Motor neuron (in vitro differentiated cells): ENCODE measurements at regions of chr10 and their contacts with region 1.

Region 1: DNA sequence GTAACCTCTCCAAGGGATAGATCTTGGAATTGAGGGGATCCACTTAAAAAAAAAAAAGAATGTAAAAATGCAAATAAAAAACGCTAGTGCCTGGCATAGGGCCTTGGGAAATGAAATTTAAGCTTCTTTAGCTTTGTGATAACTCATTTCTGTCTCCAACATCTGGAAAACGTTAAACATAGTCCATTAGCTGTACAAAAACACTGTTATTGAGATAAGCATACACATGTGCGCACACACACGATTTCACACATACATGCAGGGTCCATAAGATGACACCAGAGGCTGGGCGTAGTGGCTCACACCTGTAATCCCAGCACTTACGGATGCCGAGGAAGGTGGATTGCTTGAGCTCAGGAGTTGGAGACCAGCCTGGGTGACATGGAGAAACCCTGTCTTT is 13.7 kb upstream of the CUL2 start:
- ATAC-seq: no peak
- H3K4me3 ChIP-seq: no peak overlapping the region
- H3K27ac ChIP-seq: no peak overlapping the region
- H3K4me1 ChIP-seq: no peaks in the 10 kb centered on the region

Region 2: GRCh38 chr10:35218339-35218955 is 114.6 kb after region 1 on chr10:
- in situ Hi-C with region 1: loop called in 2 of 9 experiments (anchors 25 kb)
- ATAC-seq: peak; percentile 41 to 85 (median 64)
- H3K4me3 ChIP-seq: no peak overlapping the region
- H3K27ac ChIP-seq: no peak overlapping the region
- H3K4me1 ChIP-seq: peaks cover 0 to 9% of the 10 kb centered on the region in 2 donors